Dendritic cell treated with granulocyte-macrophage colony-stimulating factor and Interleukin-4, amounts not matched to agents 40 ng/mL and 50 ng/mL, for 4 days (primary cell): ENCODE measurements at regions of chr12 and their contacts with region 1.

Region 1: GRCh38 chr12:97148941-97149559 is 242.0 kb downstream of the NEDD1 start:
- H3K4me3 Mint-ChIP-seq: no peak overlapping the region
- H3K27ac Mint-ChIP-seq: no peak overlapping the region
- H3K4me1 Mint-ChIP-seq: no peaks in the 10 kb centered on the region
- H3K27me3 Mint-ChIP-seq: no peaks in the 10 kb centered on the region

Region 2: GRCh38 chr12:97308576-97309198 is 159.6 kb after region 1 on chr12:
- intact Hi-C with region 1: loop called (anchors 1 kb)
- H3K4me3 Mint-ChIP-seq: no peak overlapping the region
- H3K27ac Mint-ChIP-seq: no peak overlapping the region
- H3K4me1 Mint-ChIP-seq: peaks cover 6% of the 10 kb centered on the region
- H3K27me3 Mint-ChIP-seq: peaks cover 2% of the 10 kb centered on the region

Region 3: DNA sequence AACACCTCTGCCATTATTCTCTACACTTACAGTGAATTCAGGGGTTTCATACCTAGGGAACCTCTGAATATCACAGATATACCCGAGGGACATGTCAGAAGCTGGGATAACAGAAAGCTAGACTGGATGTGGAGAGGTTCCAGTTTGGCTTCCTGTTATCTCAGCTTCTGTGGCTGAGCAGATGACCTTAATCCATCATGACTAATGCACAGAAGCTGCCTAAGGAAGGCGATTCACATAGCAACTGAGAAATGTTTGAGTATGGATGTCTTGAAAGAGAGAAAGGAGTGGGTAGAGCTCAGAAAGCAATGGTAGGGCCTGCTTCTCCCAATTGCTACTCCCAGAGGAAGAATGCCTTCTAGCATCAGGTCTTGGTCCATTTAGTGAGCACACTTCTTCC is 501.2 kb after region 1 on chr12:
- intact Hi-C with region 1: no loop called
- H3K4me3 Mint-ChIP-seq: no peak overlapping the region
- H3K27ac Mint-ChIP-seq: no peak overlapping the region
- H3K4me1 Mint-ChIP-seq: no peaks in the 10 kb centered on the region
- H3K27me3 Mint-ChIP-seq: no peaks in the 10 kb centered on the region